CD4-positive, alpha-beta memory T cell (primary cell): ENCODE measurements at regions of chr17 and their contacts with region 1.

Region 1: GRCh38 chr17:48295362-48296288 is 134.4 kb downstream of the SKAP1 start:
- DNase-seq: peak; percentile 22 to 63 (median 37)
- H3K4me3 ChIP-seq: peak overlapping the region in 1 of 2 donors; percentile 21
- H3K4me3 Mint-ChIP-seq: peak overlapping the region; percentile 64 to 85 (median 77)
- H3K27ac ChIP-seq: peak overlapping the region; percentile 55
- H3K27ac Mint-ChIP-seq: peak overlapping the region; percentile 42 to 95 (median 89)
- H3K4me1 ChIP-seq: peaks cover 66% of the 10 kb centered on the region
- H3K4me1 Mint-ChIP-seq: peaks cover 52 to 80% (median 58%) of the 10 kb centered on the region in 4 donors
- H3K27me3 ChIP-seq: no peaks in the 10 kb centered on the region
- H3K27me3 Mint-ChIP-seq: no peaks in the 10 kb centered on the region

Region 2: DNA sequence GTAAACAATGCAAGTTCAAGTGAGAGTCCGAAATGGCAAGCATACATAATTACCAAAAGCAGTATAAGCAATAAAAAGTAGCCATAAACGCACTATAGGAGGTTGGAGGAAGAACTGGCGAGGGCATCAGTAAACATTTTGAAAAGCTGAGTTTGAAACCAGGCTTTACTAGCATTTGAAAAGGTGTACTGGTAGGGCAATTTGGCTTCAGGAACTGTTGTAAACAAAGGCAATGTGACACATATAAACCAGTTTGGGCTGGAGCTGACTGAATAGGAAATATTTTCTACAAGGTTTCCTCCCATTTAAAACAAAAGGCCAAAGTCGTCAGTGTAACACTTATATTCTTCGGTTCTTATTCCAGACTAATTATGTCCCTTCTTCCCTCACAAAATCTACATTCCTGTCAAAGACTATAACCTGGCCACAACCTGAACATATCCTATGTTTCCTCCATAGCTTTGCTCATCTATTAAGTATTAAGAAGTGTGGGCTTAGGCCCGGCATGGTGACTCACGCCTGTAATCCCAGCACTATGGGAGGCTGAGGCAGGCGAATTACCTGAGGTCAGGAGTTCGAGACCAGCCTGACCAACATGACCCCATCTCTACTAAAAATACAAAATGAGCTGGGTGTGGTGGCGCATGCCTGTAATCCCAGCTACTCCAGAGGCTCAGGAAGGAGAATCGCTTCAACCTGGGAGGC is 202.1 kb before region 1 on chr17:
- CTCF ChIA-PET with region 1: no interaction called
- POLR2A ChIA-PET with region 1: no interaction called
- intact Hi-C with region 1: no loop called
- DNase-seq: no peak
- H3K4me3 ChIP-seq: no peak overlapping the region
- H3K4me3 Mint-ChIP-seq: no peak overlapping the region
- H3K27ac ChIP-seq: no peak overlapping the region
- H3K27ac Mint-ChIP-seq: no peak overlapping the region
- H3K4me1 ChIP-seq: no peaks in the 10 kb centered on the region
- H3K4me1 Mint-ChIP-seq: peaks cover 5 to 14% (median 10%) of the 10 kb centered on the region in 4 donors
- H3K27me3 ChIP-seq: no peaks in the 10 kb centered on the region
- H3K27me3 Mint-ChIP-seq: no peaks in the 10 kb centered on the region

Region 3: GRCh38 chr17:48335858-48336500 is 40.4 kb after region 1 on chr17:
- CTCF ChIA-PET with region 1: interaction called, 13 read pairs
- POLR2A ChIA-PET with region 1: interaction called, 5 read pairs
- intact Hi-C with region 1: no loop called
- DNase-seq: peak in 4 of 5 donors; percentile 61 to 70 (median 66)
- H3K4me3 ChIP-seq: no peak overlapping the region
- H3K4me3 Mint-ChIP-seq: no peak overlapping the region
- H3K27ac ChIP-seq: no peak overlapping the region
- H3K27ac Mint-ChIP-seq: peak overlapping the region in 2 of 7 donors; percentile 63 to 65
- H3K4me1 ChIP-seq: no peaks in the 10 kb centered on the region
- H3K4me1 Mint-ChIP-seq: peaks cover 0 to 11% (median 4%) of the 10 kb centered on the region in 4 donors
- H3K27me3 ChIP-seq: no peaks in the 10 kb centered on the region
- H3K27me3 Mint-ChIP-seq: no peaks in the 10 kb centered on the region